ENCODE measurements at regions of chr2 and their contacts with region 1.

Region 1: DNA sequence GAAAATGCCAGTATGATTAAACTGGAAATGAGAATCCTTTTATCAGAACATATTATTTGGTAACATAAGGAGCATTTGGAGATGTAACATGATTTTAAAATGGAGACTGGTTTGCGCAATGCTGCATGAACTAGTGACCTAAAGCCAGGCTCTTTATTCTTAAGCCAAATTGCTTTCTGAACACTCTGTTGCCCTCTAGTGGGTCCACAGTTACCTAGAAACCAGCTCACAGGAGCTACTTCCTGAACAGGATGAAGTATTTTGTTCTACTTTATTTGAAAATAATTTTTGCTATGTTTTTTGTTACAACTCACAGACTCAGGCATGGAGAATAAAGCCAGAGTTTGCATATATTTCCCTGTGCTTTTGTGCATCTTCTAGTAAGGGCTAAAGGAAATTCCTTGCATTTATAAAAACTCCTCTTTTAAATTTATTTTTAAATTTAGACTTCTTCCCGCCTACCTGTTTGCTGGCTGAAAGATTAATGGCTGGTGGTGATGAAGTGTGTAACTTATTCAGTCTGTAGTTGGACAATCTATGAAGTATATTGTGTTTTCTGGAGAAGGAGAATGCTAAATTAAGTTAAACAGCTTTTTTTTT is 146.7 kb downstream of the PARD3B start:
- DNase-seq: peak; percentile 34
- H3K4me3 ChIP-seq: no peak overlapping the region; a peak in 1 of 4 replicates
- H3K27ac ChIP-seq: no peak overlapping the region
- H3K4me1 ChIP-seq: no peaks in the 10 kb centered on the region; a peak in 1 of 4 replicates
- H3K27me3 ChIP-seq: no peaks in the 10 kb centered on the region
- CTCF ChIP-seq: peak; percentile 82
- EP300 ChIP-seq: no peak
- RAD21 ChIP-seq: peak; percentile 93

Region 2: DNA sequence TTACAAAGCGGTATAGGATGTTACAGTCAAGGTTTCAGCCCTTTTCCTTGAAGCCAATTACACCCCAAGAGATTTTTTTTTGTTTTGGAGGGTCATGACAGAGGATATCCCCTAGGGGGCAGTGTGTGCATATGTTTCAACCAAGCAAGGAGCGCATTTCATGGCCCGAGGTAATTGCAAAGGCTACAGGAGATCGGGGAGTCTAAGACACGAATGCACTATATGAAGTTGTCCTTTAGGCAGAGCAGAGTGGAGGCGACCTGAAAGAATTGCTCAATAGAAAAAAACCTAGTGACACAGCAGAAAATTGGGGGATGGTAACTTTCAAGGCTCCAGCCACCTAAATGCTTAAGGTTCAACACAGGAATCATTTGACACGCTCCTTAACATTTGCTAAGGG is 366.5 kb before region 1 on chr2:
- CTCF ChIA-PET with region 1: interaction called, 19 read pairs
- POLR2A ChIA-PET with region 1: no interaction called
- DNase-seq: peak; percentile 72
- H3K4me3 ChIP-seq: 0 out of 4 replicates have a peak overlapping the region, but pooled peaks of 1 of the 2 experiments have one; percentile 23
- H3K27ac ChIP-seq: no peak overlapping the region
- H3K4me1 ChIP-seq: peaks cover 2 to 5% of the 10 kb centered on the region in 2 experiments; a peak in 2 of 4 replicates
- H3K27me3 ChIP-seq: no peaks in the 10 kb centered on the region
- CTCF ChIP-seq: peak; percentile 92
- EP300 ChIP-seq: no peak
- RAD21 ChIP-seq: peak; percentile 98

Region 3: DNA sequence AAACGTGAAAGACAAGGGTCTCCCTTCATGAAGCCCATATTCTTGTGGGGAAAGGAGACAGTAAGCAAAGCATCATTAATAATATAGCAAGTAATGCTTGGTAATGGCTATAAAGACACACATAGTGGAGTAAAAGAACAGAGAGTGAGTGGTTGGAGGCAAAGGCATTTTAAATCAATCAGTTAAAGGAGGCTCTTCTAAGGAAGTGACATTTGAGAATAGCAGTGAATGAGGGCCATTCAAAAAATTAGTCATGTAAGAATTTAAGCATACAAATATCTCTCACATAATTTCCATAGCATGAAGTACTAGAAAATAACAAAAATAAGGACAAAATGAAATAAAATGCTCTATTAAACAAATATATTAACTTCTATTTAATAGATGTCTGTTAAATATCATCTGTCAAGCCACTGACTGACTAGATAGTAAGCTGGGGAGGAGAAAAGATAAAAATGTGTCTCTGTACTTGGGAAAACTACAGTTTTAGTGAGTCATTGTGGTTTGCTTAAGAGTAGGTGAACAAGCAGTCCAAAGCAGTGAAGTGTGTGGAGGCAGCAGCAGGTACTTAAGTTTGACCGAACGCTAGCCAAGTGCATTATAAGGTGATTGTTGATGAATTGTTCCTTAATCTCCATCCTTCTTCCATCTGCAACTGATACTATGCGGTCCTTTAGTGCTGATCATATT is 13.4 kb after region 1 on chr2:
- CTCF ChIA-PET with region 1: interaction called, 11 read pairs
- POLR2A ChIA-PET with region 1: no interaction called
- DNase-seq: no peak
- H3K4me3 ChIP-seq: no peak overlapping the region
- H3K27ac ChIP-seq: no peak overlapping the region
- H3K4me1 ChIP-seq: peaks cover 0 to 6% of the 10 kb centered on the region in 2 experiments; a peak in 2 of 4 replicates
- H3K27me3 ChIP-seq: no peaks in the 10 kb centered on the region
- CTCF ChIP-seq: no peak
- EP300 ChIP-seq: no peak
- RAD21 ChIP-seq: no peak

Region 4: DNA sequence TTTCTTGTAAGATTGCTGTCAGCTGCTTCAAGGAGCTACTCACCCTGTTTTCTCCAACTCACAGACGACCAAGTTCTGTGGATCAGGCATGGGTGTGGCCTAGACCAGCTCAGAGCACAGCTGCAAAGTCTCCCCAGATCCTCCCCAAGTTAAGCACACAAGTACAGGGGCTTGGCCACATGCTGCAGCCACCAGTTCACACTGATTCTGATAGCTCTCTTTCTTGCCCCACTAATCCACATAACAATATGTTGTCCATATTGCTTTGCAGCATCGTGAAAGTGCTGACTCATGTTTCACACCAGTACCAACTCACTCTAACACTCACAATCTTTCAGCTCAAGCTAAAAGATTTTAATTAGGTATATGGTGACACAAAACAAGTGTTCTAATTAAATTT is 290.3 kb after region 1 on chr2:
- CTCF ChIA-PET with region 1: no interaction called
- POLR2A ChIA-PET with region 1: no interaction called
- DNase-seq: no peak
- H3K4me3 ChIP-seq: no peak overlapping the region
- H3K27ac ChIP-seq: no peak overlapping the region
- H3K4me1 ChIP-seq: peaks cover 0 to 3% of the 10 kb centered on the region in 2 experiments; a peak in 1 of 4 replicates
- H3K27me3 ChIP-seq: no peaks in the 10 kb centered on the region
- CTCF ChIP-seq: no peak
- EP300 ChIP-seq: no peak
- RAD21 ChIP-seq: no peak